Endothelial cell of umbilical vein (primary cell): ENCODE measurements at regions of chr1 and their contacts with region 1.

Region 1: GRCh38 chr1:92749024-92749634 is 35.8 kb downstream of the EVI5 start:
- DNase-seq: peak; percentile 42
- H3K4me3 ChIP-seq: no peak overlapping the region
- H3K27ac ChIP-seq: no peak overlapping the region
- H3K4me1 ChIP-seq: peaks cover 13% of the 10 kb centered on the region
- H3K27me3 ChIP-seq: no peaks in the 10 kb centered on the region
- CTCF ChIP-seq: peak; percentile 61 to 64
- POLR2A ChIP-seq: no peak

Region 2: GRCh38 chr1:92705446-92705845 is 43.7 kb before region 1 on chr1:
- CTCF ChIA-PET with region 1: interaction called, 13 read pairs
- POLR2A ChIA-PET with region 1: no interaction called
- dilution Hi-C with region 1: no loop called
- intact Hi-C with region 1: no loop called
- DNase-seq: peak; percentile 84
- H3K4me3 ChIP-seq: peak overlapping the region in 1 of 3 experiments; percentile 45
- H3K27ac ChIP-seq: peak overlapping the region; percentile 41
- H3K4me1 ChIP-seq: peaks cover 18% of the 10 kb centered on the region
- H3K27me3 ChIP-seq: no peaks in the 10 kb centered on the region
- CTCF ChIP-seq: no peak
- POLR2A ChIP-seq: no peak

Region 3: GRCh38 chr1:92736395-92736794 is 12.7 kb before region 1 on chr1:
- CTCF ChIA-PET with region 1: interaction called, 14 read pairs
- POLR2A ChIA-PET with region 1: no interaction called
- dilution Hi-C with region 1: no loop called
- intact Hi-C with region 1: no loop called
- DNase-seq: peak; percentile 23
- H3K4me3 ChIP-seq: no peak overlapping the region
- H3K27ac ChIP-seq: no peak overlapping the region
- H3K4me1 ChIP-seq: no peaks in the 10 kb centered on the region
- H3K27me3 ChIP-seq: no peaks in the 10 kb centered on the region
- CTCF ChIP-seq: peak in 1 of 2 donors; percentile 17
- POLR2A ChIP-seq: no peak

Region 4: GRCh38 chr1:92764116-92764515 is 15.0 kb after region 1 on chr1:
- CTCF ChIA-PET with region 1: interaction called, 15 read pairs
- POLR2A ChIA-PET with region 1: no interaction called
- dilution Hi-C with region 1: no loop called
- intact Hi-C with region 1: no loop called
- DNase-seq: no peak
- H3K4me3 ChIP-seq: no peak overlapping the region
- H3K27ac ChIP-seq: no peak overlapping the region
- H3K4me1 ChIP-seq: no peaks in the 10 kb centered on the region
- H3K27me3 ChIP-seq: no peaks in the 10 kb centered on the region
- CTCF ChIP-seq: no peak
- POLR2A ChIP-seq: no peak

Region 5: GRCh38 chr1:92784639-92785500 is 35.7 kb after region 1 on chr1 and contains the start of gene EVI5:
- CTCF ChIA-PET with region 1: interaction called, 35 read pairs
- POLR2A ChIA-PET with region 1: no interaction called
- dilution Hi-C with region 1: no loop called
- intact Hi-C with region 1: loop called (anchors 1 kb)
- DNase-seq: peak; percentile 99
- H3K4me3 ChIP-seq: peak within 1 kb of the TSS; percentile 73 to 88 (median 77)
- H3K27ac ChIP-seq: peak within 1 kb of the TSS; percentile 97
- H3K4me1 ChIP-seq: peaks cover 3% of the 10 kb centered on the region
- H3K27me3 ChIP-seq: no peaks in the 10 kb centered on the region
- CTCF ChIP-seq: no peak
- POLR2A ChIP-seq: peak; percentile 78
- total RNA-seq, gene EVI5: 26.2 and 34.4 TPM in 2 replicates

Region 6: GRCh38 chr1:92804721-92805169 is 55.6 kb after region 1 on chr1:
- CTCF ChIA-PET with region 1: interaction called, 20 read pairs
- POLR2A ChIA-PET with region 1: no interaction called
- dilution Hi-C with region 1: no loop called
- intact Hi-C with region 1: no loop called
- DNase-seq: peak; percentile 97
- H3K4me3 ChIP-seq: no peak overlapping the region
- H3K27ac ChIP-seq: peak overlapping the region; percentile 94
- H3K4me1 ChIP-seq: peaks cover 15% of the 10 kb centered on the region
- H3K27me3 ChIP-seq: no peaks in the 10 kb centered on the region
- CTCF ChIP-seq: no peak
- POLR2A ChIP-seq: peak; percentile 55

Region 7: DNA sequence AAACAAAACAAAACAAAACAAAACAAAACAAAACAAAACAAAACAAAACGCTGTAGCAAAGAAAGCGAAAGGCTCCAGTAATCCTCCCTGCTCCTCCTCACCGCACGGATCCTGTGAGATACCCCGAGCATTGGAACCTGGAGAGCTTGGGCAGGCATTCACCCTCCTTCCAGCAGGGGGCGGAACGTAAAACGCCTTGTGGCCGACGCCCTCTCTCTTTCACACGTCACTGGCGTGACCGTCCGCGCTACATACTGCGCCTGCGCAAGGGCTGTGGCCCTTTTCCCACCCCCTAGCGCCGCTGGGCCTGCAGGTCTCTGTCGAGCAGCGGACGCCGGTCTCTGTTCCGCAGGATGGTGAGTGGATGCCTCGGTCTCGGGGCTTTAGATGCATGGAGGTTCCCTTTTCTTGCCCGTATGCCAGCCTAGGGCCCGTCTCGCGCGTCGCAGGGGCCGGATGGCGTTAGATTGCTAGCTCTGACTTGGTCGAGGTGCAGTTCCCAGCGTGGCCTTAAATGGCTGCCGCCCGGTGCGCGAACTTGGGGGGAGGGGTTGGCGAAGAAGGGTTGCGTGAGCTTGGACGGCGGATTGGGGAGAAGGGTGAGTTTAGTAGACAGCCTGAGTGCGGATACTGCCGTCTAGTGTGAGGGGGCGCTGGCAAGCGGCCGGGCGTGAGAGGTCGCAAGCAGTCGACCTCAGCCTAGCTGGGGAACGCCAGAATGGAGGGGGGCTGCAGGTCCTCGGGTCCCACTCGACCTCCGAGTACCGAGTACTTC is 82.8 kb after region 1 on chr1 and contains the start of gene RPL5:
- CTCF ChIA-PET with region 1: interaction called, 21 read pairs
- POLR2A ChIA-PET with region 1: interaction called, 8 read pairs
- dilution Hi-C with region 1: no loop called
- intact Hi-C with region 1: no loop called
- DNase-seq: peak; percentile 99
- H3K4me3 ChIP-seq: peak within 1 kb of the TSS; percentile 85 to 97 (median 85)
- H3K27ac ChIP-seq: peak within 1 kb of the TSS; percentile 73
- H3K4me1 ChIP-seq: peaks cover 26% of the 10 kb centered on the region
- H3K27me3 ChIP-seq: no peaks in the 10 kb centered on the region
- CTCF ChIP-seq: peak; percentile 97 to 98
- POLR2A ChIP-seq: peak; percentile 99
- total RNA-seq, gene RPL5: 1,109 and 1,117 TPM in 2 replicates